ENCODE measurements at regions of chr3 and their contacts with region 1.

Region 1: DNA sequence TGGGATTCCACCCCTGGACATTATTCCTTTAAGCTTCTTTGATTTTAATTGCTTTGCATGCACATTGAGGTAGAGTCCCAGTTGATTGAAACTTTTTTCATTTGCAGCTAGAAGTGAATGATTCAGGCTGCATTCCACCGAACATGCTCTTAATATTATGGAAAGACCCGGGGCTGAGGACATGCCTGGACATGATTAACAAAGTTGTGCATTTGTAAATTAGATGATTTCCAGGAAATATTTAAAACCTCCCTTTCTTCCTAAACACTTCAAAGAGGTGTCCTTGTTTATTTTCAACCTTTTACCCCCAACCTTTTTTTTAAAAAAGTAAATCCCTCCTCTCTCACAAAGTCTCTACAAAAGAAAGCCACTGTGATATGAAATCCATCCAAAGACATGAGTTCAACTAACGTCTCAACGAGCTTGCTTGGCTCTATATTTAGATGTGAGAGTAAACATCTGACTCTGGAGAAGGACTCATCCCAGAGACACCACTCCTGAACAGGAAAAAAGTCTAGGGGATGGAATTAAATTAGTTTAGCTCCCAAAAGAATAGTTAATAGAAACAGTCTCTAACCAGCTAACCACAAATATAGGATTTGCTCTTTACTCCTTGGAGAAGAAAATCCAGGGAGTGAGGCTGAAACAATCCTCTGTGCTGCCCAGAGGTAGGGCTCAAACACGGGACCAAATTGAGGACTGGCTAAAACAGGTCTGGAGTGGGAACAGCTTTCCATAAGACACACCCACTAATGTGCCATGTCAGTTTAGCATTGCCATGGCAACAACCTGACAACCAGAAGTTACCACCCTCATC is 83.1 kb downstream of the XXYLT1 start:
- DNase-seq: peak; percentile 38
- H3K4me3 ChIP-seq: no peak overlapping the region
- H3K27me3 ChIP-seq: no peaks in the 10 kb centered on the region
- CTCF ChIP-seq: no peak

Region 2: GRCh38 chr3:194906229-194906629 is 281.6 kb before region 1 on chr3:
- CTCF ChIA-PET with region 1: no interaction called
- POLR2A ChIA-PET with region 1: no interaction called
- DNase-seq: no peak
- H3K4me3 ChIP-seq: no peak overlapping the region
- H3K27me3 ChIP-seq: 0 out of 2 replicates have a peak, but pooled peaks cover 1% of the 10 kb centered on the region
- CTCF ChIP-seq: no peak

Region 3: DNA sequence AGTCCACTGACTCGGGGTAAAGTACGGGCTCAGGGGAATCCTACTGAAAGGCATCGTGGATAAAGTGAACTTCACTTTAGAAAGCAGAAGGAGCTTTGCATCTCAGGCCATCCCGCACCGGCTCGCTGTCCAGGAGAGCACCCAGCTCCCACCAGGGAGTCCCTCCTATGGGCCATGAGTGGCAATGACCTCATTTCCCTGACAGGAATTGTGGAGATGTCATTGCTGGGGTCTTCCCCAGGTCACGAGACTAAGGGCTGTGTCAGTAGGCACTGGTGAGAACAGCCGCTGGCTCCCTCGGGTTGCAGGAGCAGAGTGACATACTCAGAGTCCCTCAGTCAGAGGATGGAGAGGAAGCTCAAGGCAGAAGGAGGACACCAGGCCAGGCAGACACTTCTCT is 14.2 kb before region 1 on chr3:
- CTCF ChIA-PET with region 1: interaction called, 12 read pairs
- POLR2A ChIA-PET with region 1: interaction called, 4 read pairs
- DNase-seq: no peak
- H3K4me3 ChIP-seq: no peak overlapping the region
- H3K27me3 ChIP-seq: no peaks in the 10 kb centered on the region
- CTCF ChIP-seq: no peak